ENCODE measurements at regions of chr3 and their contacts with region 1.

Region 1: GRCh38 chr3:98901392-98902350 is at the start of gene DCBLD2:
- H3K4me3 Mint-ChIP-seq: peak within 1 kb of the TSS; percentile 85
- H3K27ac Mint-ChIP-seq: peak within 1 kb of the TSS; percentile 89
- H3K4me1 Mint-ChIP-seq: peaks cover 14% of the 10 kb centered on the region
- H3K27me3 Mint-ChIP-seq: peaks cover 19% of the 10 kb centered on the region

Region 2: GRCh38 chr3:97764407-97765238 is 1137.0 kb before region 1 on chr3 and contains the start of gene ARL6:
- intact Hi-C with region 1: loop called (anchors 5 kb)
- H3K4me3 Mint-ChIP-seq: peak within 1 kb of the TSS; percentile 98
- H3K27ac Mint-ChIP-seq: peak within 1 kb of the TSS; percentile 88
- H3K4me1 Mint-ChIP-seq: peaks cover 21% of the 10 kb centered on the region
- H3K27me3 Mint-ChIP-seq: peaks cover 6% of the 10 kb centered on the region

Region 3: GRCh38 chr3:98593046-98593936 is 308.4 kb before region 1 on chr3 and contains the start of gene CPOX:
- intact Hi-C with region 1: loop called (anchors 5 kb)
- H3K4me3 Mint-ChIP-seq: peak within 1 kb of the TSS; percentile 97
- H3K27ac Mint-ChIP-seq: peak within 1 kb of the TSS; percentile 82
- H3K4me1 Mint-ChIP-seq: peaks cover 60% of the 10 kb centered on the region
- H3K27me3 Mint-ChIP-seq: no peaks in the 10 kb centered on the region

Region 4: DNA sequence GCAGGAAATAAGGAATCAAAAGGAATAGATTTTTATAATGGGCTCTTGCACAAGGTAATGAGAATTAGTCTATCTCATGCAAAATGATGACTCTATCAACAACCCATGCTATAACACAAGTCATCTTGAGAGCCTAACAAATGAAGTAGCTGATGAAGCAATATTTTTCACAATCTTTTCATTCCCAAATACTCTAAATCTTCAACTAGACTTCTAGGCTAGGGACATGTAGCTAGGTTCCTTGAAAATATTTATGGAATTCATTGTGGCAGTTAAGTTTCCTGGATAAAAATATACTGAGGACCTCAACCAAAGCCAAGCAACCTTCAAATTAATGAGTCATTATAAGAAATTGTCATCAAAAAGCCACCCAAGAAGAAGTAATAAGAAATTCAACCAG is 55.6 kb before region 1 on chr3:
- intact Hi-C with region 1: no loop called
- H3K4me3 Mint-ChIP-seq: no peak overlapping the region
- H3K27ac Mint-ChIP-seq: no peak overlapping the region
- H3K4me1 Mint-ChIP-seq: no peaks in the 10 kb centered on the region
- H3K27me3 Mint-ChIP-seq: no peaks in the 10 kb centered on the region